Activated CD8-positive, alpha-beta memory T cell treated with anti-CD3 and anti-CD28 coated beads, Interleukin-2, amount 10 ng/mL, durations not matched to agents 7 days and 5 days (primary cell): ENCODE measurements at regions of chr3 and their contacts with region 1.

Region 1: DNA sequence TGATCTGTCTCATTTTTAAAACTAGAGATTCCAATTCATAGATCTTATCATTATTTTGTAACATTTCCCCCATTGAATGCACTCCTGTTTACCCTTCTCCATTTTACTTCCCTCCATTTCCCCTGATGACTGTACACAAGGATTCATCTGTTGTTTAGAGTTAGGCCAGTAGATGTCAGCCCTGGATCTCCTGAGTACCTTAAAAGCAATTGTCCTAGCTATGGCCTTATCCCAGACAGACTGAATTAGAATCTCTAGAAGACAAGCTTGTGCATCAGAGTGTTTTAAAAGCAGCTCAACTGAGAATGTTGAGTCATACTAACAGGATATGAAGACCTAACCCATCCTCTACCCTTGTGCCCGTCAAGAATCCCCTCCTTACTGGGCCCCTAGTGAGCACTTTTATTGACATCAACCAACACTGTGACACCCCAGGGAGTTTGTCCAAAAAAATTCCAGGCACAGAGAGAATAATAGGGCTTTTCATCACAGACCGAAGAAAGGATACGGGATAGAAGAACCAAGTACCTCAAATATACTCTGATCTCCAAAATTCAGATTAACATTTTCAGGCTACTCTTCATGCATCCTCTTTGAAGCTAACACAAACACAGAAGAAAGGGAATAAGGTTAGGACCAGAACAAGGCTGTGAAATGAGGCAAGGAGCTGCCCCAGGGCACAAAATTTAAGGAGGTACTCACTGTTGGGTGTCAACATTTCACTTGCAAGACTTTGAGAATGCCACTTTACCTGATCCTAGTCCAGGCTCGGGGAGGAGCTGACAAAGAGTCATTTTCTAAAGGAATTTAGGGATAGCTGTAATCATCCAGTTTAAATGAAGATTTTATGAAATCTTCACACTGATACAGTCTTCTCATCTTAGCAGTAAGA is 17.1 kb downstream of the ZBED2 start:
- DNase-seq: no peak
- ATAC-seq: peak; percentile 92
- H3K4me3 Mint-ChIP-seq: no peak overlapping the region
- H3K27ac Mint-ChIP-seq: peak overlapping the region; percentile 69
- H3K4me1 Mint-ChIP-seq: peaks cover 73% of the 10 kb centered on the region
- H3K27me3 Mint-ChIP-seq: no peaks in the 10 kb centered on the region

Region 2: DNA sequence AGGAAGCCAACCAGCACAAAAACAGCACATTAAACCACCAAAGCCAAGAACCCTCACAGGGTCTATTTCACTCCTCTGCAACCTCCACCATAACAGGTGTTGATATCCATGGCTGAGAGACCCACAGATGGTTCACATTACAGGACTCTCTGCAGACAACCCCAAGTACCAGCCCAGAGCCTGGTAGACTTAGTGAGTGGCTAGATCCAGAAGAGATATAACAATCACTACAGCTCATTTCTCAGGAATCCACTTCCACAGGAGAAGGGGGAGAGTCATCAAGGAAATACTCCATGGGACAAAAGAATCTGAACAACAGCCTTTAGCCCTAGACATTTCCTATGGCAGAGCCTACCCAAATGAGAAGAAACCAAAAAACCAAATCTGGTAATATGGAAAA is 204.2 kb before region 1 on chr3:
- CTCF ChIA-PET with region 1: no interaction called
- DNase-seq: no peak
- ATAC-seq: no peak
- H3K4me3 Mint-ChIP-seq: no peak overlapping the region
- H3K27ac Mint-ChIP-seq: no peak overlapping the region
- H3K4me1 Mint-ChIP-seq: no peaks in the 10 kb centered on the region
- H3K27me3 Mint-ChIP-seq: no peaks in the 10 kb centered on the region

Region 3: GRCh38 chr3:111414531-111414930 is 163.5 kb before region 1 on chr3:
- CTCF ChIA-PET with region 1: no interaction called
- DNase-seq: no peak
- ATAC-seq: no peak
- H3K4me3 Mint-ChIP-seq: no peak overlapping the region
- H3K27ac Mint-ChIP-seq: no peak overlapping the region
- H3K4me1 Mint-ChIP-seq: no peaks in the 10 kb centered on the region
- H3K27me3 Mint-ChIP-seq: peaks cover 7% of the 10 kb centered on the region

Region 4: DNA sequence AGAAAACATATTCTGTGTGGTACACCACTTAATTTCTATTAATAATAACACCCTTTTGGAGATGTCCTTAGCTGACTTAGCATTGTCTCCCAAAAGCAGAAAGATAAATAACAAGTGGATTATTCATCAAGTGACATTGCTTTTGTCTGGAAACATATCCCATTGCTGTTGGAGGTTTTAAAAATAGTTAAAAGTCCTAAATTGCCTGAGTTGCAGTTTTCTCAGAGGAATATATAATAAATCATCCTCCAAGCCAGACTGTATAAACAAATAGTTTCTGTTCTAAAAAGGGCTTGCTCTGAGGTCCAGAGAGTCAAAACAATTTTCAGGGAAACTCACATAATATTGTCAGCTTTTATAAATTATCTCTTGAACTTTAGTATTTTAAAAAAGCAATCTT is 96.5 kb before region 1 on chr3:
- CTCF ChIA-PET with region 1: no interaction called
- DNase-seq: no peak
- ATAC-seq: no peak
- H3K4me3 Mint-ChIP-seq: no peak overlapping the region
- H3K27ac Mint-ChIP-seq: no peak overlapping the region
- H3K4me1 Mint-ChIP-seq: no peaks in the 10 kb centered on the region
- H3K27me3 Mint-ChIP-seq: no peaks in the 10 kb centered on the region

Region 5: DNA sequence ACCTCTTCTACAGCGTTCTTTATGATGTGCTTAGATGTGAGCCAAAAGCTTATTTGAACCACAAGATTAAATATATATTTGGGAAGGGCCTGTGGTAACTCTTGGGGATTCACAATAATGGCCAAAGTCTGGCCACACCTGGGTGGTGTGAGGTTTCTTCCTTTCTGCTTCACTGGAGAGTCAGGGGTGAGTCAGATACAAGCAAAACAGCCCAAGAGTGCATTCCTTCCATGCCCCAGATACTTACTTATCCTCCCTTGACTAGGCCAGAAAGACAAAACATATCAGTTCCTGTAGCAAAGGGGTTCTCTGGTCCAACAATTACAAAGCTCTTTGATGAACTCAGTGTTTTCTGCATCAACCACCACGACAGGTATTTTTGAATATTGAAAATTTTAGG is 16.2 kb after region 1 on chr3:
- CTCF ChIA-PET with region 1: interaction called, 24 read pairs
- DNase-seq: no peak
- ATAC-seq: peak; percentile 27
- H3K4me3 Mint-ChIP-seq: peak overlapping the region; percentile 83
- H3K27ac Mint-ChIP-seq: peak overlapping the region; percentile 87
- H3K4me1 Mint-ChIP-seq: peaks cover 84% of the 10 kb centered on the region
- H3K27me3 Mint-ChIP-seq: no peaks in the 10 kb centered on the region

Region 6: GRCh38 chr3:111610189-111610588 is 32.1 kb after region 1 on chr3:
- CTCF ChIA-PET with region 1: interaction called, 56 read pairs
- DNase-seq: no peak
- ATAC-seq: peak; percentile 78
- H3K4me3 Mint-ChIP-seq: peak overlapping the region; percentile 44
- H3K27ac Mint-ChIP-seq: peak overlapping the region; percentile 98
- H3K4me1 Mint-ChIP-seq: peaks cover 94% of the 10 kb centered on the region
- H3K27me3 Mint-ChIP-seq: no peaks in the 10 kb centered on the region

Region 7: GRCh38 chr3:111668912-111669488 is 91.0 kb after region 1 on chr3:
- CTCF ChIA-PET with region 1: interaction called, 13 read pairs
- DNase-seq: no peak
- ATAC-seq: peak; percentile 40
- H3K4me3 Mint-ChIP-seq: no peak overlapping the region
- H3K27ac Mint-ChIP-seq: peak overlapping the region; percentile 75
- H3K4me1 Mint-ChIP-seq: peaks cover 84% of the 10 kb centered on the region
- H3K27me3 Mint-ChIP-seq: no peaks in the 10 kb centered on the region